WTC11 (cell line): ENCODE measurements at regions of chr3 and their contacts with region 1.

Region 1: GRCh38 chr3:52231502-52232293 is 6.3 kb upstream of the TLR9 start:
- DNase-seq: peak; percentile 85
- ATAC-seq: peak; percentile 75
- H3K4me3 Mint-ChIP-seq: no peak overlapping the region
- H3K27ac Mint-ChIP-seq: no peak overlapping the region; the same call in 1 of the 2 replicates
- H3K4me1 Mint-ChIP-seq: peaks cover 9% of the 10 kb centered on the region
- H3K27me3 Mint-ChIP-seq: no peaks in the 10 kb centered on the region
- CTCF ChIP-seq: peak; percentile 91

Region 2: GRCh38 chr3:52171514-52172261 is 60.0 kb before region 1 on chr3:
- CTCF ChIA-PET with region 1: interaction called, 10 read pairs
- POLR2A ChIA-PET with region 1: no interaction called
- DNase-seq: no peak
- ATAC-seq: no peak
- H3K4me3 Mint-ChIP-seq: no peak overlapping the region
- H3K27ac Mint-ChIP-seq: 0 out of 2 replicates have a peak overlapping the region, but pooled peaks have one; percentile 1
- H3K4me1 Mint-ChIP-seq: peaks cover 15% of the 10 kb centered on the region
- H3K27me3 Mint-ChIP-seq: no peaks in the 10 kb centered on the region
- CTCF ChIP-seq: no peak

Region 3: GRCh38 chr3:52190294-52191074 is 41.2 kb before region 1 on chr3:
- CTCF ChIA-PET with region 1: no interaction called
- POLR2A ChIA-PET with region 1: no interaction called
- DNase-seq: no peak
- ATAC-seq: no peak
- H3K4me3 Mint-ChIP-seq: no peak overlapping the region
- H3K27ac Mint-ChIP-seq: no peak overlapping the region
- H3K4me1 Mint-ChIP-seq: no peaks in the 10 kb centered on the region
- H3K27me3 Mint-ChIP-seq: no peaks in the 10 kb centered on the region
- CTCF ChIP-seq: no peak

Region 4: DNA sequence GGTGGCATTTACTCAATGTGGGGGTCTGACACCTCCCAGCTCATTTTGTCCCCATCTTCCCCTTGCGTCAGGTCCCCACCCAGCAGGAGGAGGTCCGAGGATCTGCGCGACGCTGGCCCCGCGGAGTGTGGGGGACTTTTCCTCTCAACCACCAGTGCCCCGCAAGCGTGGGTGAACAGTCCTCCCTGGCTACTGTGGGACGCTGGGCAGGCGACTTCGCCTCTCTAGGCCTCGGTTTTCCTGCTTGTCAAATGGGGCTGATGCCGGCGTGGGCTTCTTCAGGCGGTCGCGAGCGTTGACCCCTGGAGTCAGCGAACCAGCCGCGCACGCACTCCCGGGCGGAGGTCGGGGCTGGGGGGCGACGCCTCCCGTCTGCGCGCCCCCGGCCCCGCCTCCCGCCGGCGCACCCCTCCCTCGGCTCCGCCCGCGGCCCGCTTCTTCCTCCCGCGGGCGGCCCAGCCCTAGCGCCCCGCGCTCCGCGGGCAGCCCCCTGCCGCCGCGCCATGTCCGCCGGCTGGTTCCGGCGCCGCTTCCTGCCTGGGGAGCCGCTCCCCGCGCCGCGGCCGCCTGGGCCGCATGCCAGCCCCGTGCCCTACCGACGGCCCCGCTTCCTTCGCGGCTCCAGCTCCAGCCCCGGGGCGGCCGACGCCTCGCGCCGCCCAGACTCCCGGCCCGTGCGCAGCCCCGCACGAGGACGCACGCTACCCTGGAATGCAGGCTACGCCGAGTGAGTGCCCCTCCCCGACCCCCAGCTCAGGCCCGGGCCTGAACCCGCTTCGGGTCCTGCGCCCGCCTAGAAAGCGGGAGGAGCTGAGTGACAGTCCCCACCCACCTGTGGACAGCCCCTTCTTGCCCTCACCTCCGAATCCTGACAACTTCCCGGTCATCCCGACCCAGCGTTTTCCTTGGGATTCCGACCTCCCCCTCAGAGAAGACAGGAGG is 13.9 kb after region 1 on chr3 and contains the start of gene PPM1M:
- CTCF ChIA-PET with region 1: interaction called, 11 read pairs
- POLR2A ChIA-PET with region 1: interaction called, 5 read pairs
- DNase-seq: peak; percentile 72
- ATAC-seq: peak; percentile 86
- H3K4me3 Mint-ChIP-seq: peak within 1 kb of the TSS; percentile 67
- H3K27ac Mint-ChIP-seq: no peak within 1 kb of the TSS
- H3K4me1 Mint-ChIP-seq: peaks cover 15% of the 10 kb centered on the region
- H3K27me3 Mint-ChIP-seq: peaks cover 50% of the 10 kb centered on the region
- CTCF ChIP-seq: no peak
- total RNA-seq, gene PPM1M: 5.1 to 7.0 TPM (median 6.0 TPM) in 3 replicates

Region 5: DNA sequence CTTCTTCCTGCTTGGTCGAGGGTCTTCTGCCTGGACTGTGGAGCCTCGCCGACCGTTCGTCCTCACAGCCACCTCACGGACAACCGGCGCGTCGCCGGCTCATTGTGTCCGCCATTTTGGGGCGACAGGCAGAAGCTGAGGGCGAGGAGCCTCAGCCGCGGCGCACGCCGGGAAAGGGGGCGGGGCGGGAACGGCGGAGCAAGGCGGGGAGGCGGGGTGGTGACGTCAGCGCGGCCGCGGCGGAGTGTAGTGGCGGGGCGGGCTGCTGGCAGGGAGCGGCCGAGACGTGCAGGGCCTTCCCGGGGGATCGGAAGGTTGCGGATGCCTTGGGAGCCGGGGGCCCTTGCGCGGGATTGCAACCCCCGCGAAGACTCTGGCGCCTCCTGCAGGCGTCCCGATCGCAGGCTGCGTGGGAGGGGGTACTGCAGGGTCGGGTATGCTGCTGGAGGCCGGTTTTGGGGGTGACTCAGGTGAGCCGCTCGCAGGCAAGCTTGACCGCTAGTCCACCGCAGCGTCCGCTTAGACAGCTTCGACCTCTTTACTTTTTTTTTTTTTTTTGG is 46.9 kb after region 1 on chr3 and contains the start of gene WDR82:
- CTCF ChIA-PET with region 1: interaction called, 41 read pairs
- POLR2A ChIA-PET with region 1: interaction called, 19 read pairs
- DNase-seq: peak; percentile 98
- ATAC-seq: peak; percentile 93
- H3K4me3 Mint-ChIP-seq: peak within 1 kb of the TSS; percentile 94
- H3K27ac Mint-ChIP-seq: peak within 1 kb of the TSS; percentile 100
- H3K4me1 Mint-ChIP-seq: peaks cover 34% of the 10 kb centered on the region
- H3K27me3 Mint-ChIP-seq: no peaks in the 10 kb centered on the region
- CTCF ChIP-seq: 0 out of 2 replicates have a peak, but pooled peaks have one; percentile 32
- total RNA-seq, gene WDR82: 64.6 to 69.7 TPM (median 64.9 TPM) in 3 replicates

Region 6: GRCh38 chr3:52299879-52300611 is 68.3 kb after region 1 on chr3:
- CTCF ChIA-PET with region 1: interaction called, 12 read pairs
- POLR2A ChIA-PET with region 1: no interaction called
- DNase-seq: peak; percentile 26
- ATAC-seq: peak; percentile 55
- H3K4me3 Mint-ChIP-seq: peak overlapping the region; percentile 65
- H3K27ac Mint-ChIP-seq: no peak overlapping the region
- H3K4me1 Mint-ChIP-seq: peaks cover 18% of the 10 kb centered on the region
- H3K27me3 Mint-ChIP-seq: peaks cover 6% of the 10 kb centered on the region
- CTCF ChIP-seq: no peak

Region 7: DNA sequence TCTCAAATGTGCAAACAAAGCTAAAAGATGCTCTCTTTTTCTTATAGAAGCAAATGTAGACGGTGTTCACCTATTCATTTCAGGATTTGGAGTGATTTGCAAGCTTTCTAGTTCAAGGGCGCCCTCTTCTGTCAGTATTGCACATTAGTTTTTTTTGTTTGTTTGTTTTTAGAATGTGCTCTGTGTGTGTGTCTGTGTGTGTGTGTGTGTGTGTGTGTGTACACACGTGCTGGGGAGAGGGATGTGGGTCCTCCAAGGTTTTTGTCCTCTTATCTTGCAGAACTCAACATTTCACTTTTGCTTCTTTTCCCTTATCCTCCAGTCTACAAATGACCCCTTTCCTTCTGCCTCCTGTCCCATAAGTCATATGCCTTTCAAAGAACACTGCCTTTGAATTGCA is 107.9 kb after region 1 on chr3:
- CTCF ChIA-PET with region 1: interaction called, 20 read pairs
- POLR2A ChIA-PET with region 1: no interaction called
- DNase-seq: peak; percentile 35
- ATAC-seq: peak; percentile 58
- H3K4me3 Mint-ChIP-seq: no peak overlapping the region
- H3K27ac Mint-ChIP-seq: no peak overlapping the region
- H3K4me1 Mint-ChIP-seq: no peaks in the 10 kb centered on the region
- H3K27me3 Mint-ChIP-seq: no peaks in the 10 kb centered on the region; the same call in 1 of the 2 replicates
- CTCF ChIP-seq: peak; percentile 67